ENCODE measurements at regions of chr18 and their contacts with region 1.

Region 1: GRCh38 chr18:12376718-12377555 is at the start of gene AFG3L2:
- DNase-seq: peak; percentile 100
- ATAC-seq: peak; percentile 83
- H3K4me3 Mint-ChIP-seq: peak within 1 kb of the TSS; percentile 91
- H3K27ac Mint-ChIP-seq: peak within 1 kb of the TSS; percentile 100
- H3K4me1 Mint-ChIP-seq: peaks cover 41% of the 10 kb centered on the region
- H3K27me3 Mint-ChIP-seq: no peaks in the 10 kb centered on the region
- CTCF ChIP-seq: no peak
- total RNA-seq, gene AFG3L2: 73.9 to 109 TPM (median 76.0 TPM) in 3 replicates

Region 2: DNA sequence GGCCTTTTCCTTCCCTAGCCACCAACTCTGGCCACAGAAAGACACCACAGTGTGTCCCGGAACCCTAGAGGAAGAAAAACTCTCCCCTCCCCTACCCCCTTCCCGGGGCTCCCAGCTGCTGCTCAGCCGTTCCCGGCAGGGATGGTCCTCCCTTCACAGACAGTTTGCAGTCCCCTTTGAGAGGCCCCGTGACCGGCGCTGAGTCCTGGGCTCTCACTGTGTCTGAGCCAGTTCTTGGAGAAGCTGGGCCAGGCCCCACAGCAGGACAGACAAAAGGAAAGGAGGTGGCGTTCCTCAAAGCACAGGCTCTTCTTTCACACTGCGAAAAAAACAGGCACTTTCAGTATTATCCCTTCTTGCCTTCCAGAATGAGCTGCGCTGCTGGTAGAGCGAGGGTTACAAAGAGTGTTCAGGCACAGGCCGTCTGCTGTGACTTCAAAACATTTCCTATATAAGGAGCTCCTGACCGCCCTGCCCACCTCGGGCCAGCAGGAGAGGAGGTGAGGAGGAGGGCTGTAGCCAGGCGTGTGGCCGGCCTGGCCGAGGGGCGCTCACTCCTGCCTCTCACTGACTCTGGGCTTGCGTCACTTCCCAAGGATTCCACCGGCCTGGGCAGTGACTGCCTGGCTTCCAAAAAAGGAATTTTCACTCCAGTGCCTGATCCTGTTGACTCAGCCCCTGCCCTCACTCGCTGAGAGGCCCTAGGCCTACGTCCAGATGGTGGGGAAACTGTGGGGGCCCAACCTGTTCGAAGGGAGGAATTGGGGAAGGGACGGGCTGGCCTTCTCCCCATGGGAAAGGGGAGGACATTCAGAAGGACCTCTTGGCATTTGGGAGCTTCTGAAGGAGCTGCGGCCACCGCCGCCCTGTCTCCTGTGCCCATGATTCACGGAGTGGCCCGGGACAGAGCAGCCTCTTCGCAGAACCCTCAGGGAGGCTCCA is 97.9 kb before region 1 on chr18:
- CTCF ChIA-PET with region 1: interaction called, 12 read pairs
- POLR2A ChIA-PET with region 1: interaction called, 3 read pairs
- DNase-seq: peak; percentile 71
- ATAC-seq: peak; percentile 93
- H3K4me3 Mint-ChIP-seq: no peak overlapping the region
- H3K27ac Mint-ChIP-seq: peak overlapping the region; percentile 36
- H3K4me1 Mint-ChIP-seq: peaks cover 25% of the 10 kb centered on the region
- H3K27me3 Mint-ChIP-seq: no peaks in the 10 kb centered on the region; the same call in 1 of the 2 replicates
- CTCF ChIP-seq: no peak

Region 3: GRCh38 chr18:12287684-12288402 is 89.1 kb before region 1 on chr18:
- CTCF ChIA-PET with region 1: interaction called, 10 read pairs
- POLR2A ChIA-PET with region 1: interaction called, 5 read pairs
- DNase-seq: peak; percentile 57
- ATAC-seq: peak; percentile 9
- H3K4me3 Mint-ChIP-seq: peak overlapping the region; percentile 82
- H3K27ac Mint-ChIP-seq: peak overlapping the region; percentile 55
- H3K4me1 Mint-ChIP-seq: peaks cover 36% of the 10 kb centered on the region
- H3K27me3 Mint-ChIP-seq: peaks cover 33% of the 10 kb centered on the region
- CTCF ChIP-seq: no peak

Region 4: GRCh38 chr18:12336875-12337274 is 40.1 kb before region 1 on chr18:
- CTCF ChIA-PET with region 1: interaction called, 12 read pairs
- POLR2A ChIA-PET with region 1: interaction called, 13 read pairs
- DNase-seq: no peak
- ATAC-seq: no peak
- H3K4me3 Mint-ChIP-seq: peak overlapping the region; percentile 35
- H3K27ac Mint-ChIP-seq: peak overlapping the region; percentile 92
- H3K4me1 Mint-ChIP-seq: peaks cover 58% of the 10 kb centered on the region
- H3K27me3 Mint-ChIP-seq: no peaks in the 10 kb centered on the region
- CTCF ChIP-seq: no peak

Region 5: DNA sequence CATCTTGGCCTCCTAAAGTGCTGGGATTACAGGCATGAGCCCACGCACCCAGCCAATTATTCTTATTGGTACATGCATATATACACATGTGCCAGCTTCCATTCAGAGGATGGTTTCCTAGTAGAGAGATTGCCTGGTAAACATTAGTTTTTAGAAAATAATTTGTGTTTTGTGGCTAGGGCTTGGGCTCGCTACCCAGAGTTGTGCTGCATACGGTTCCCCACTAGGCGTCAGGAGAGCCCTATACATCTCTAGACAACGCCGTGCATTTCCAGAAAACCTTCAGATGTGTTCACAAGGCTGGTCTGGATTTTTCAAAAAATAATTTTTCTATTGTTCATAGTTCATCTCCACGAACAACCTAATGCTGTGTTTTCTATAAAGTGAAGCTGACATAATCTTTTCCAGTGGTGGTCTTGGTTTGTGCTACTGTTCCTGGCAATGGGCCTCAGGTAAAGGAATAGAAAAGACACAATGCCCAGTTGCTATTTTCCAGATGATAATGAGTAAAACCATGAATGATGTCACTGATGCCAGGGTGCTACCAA is 14.8 kb after region 1 on chr18:
- CTCF ChIA-PET with region 1: interaction called, 12 read pairs
- POLR2A ChIA-PET with region 1: no interaction called
- DNase-seq: peak; percentile 50
- ATAC-seq: peak; percentile 78
- H3K4me3 Mint-ChIP-seq: no peak overlapping the region
- H3K27ac Mint-ChIP-seq: no peak overlapping the region; the same call in 1 of the 2 replicates
- H3K4me1 Mint-ChIP-seq: peaks cover 9% of the 10 kb centered on the region
- H3K27me3 Mint-ChIP-seq: no peaks in the 10 kb centered on the region
- CTCF ChIP-seq: peak; percentile 73

Measured in WTC11 (cell line).